ENCODE measurements at regions of chr12 and their contacts with region 1.

Region 1: DNA sequence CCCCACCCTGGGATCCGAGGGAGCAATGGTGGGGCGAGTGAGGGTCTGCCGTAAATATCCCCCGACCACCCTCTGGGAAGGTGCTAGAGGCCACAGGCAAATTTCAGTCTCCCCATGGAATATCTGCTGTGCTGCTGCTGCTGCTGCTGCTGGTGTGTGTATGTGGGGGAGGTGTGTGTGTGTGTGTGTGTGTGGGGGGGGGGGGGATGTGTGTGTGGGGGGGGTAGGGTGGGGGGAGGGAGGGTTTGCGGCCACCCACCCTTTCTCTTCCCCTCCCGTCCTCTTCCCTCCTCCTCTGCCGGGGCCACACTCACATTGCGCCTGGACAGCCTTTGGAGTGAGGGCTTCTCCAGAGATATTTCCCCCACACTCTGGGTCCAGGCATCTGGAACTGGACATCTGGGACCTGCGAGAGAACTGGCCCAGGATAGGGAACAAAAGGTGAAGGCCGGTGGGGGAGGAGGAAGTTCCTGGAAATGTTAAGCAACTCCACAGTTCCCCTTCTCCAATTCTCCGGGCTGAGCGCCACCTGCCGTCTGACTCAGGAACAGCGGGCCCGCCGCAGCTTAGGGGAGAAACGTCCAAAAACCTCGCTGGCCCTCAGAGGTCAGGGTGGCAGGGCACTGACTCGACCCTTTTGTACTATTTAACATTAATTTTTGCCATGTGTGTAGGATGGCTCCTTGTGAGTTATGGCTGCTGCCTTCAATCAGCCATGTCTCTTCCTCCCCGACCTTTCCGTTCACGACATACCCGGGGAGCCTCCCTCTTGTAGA is at the start of gene C1RL:
- DNase-seq: peak; percentile 85
- ATAC-seq: peak; percentile 27
- H3K4me3 Mint-ChIP-seq: peak within 1 kb of the TSS; percentile 95
- H3K27ac Mint-ChIP-seq: peak within 1 kb of the TSS; percentile 92
- H3K4me1 Mint-ChIP-seq: peaks cover 58% of the 10 kb centered on the region
- H3K27me3 Mint-ChIP-seq: no peaks in the 10 kb centered on the region
- total RNA-seq, gene C1RL: 21.5 to 23.3 TPM

Region 2: DNA sequence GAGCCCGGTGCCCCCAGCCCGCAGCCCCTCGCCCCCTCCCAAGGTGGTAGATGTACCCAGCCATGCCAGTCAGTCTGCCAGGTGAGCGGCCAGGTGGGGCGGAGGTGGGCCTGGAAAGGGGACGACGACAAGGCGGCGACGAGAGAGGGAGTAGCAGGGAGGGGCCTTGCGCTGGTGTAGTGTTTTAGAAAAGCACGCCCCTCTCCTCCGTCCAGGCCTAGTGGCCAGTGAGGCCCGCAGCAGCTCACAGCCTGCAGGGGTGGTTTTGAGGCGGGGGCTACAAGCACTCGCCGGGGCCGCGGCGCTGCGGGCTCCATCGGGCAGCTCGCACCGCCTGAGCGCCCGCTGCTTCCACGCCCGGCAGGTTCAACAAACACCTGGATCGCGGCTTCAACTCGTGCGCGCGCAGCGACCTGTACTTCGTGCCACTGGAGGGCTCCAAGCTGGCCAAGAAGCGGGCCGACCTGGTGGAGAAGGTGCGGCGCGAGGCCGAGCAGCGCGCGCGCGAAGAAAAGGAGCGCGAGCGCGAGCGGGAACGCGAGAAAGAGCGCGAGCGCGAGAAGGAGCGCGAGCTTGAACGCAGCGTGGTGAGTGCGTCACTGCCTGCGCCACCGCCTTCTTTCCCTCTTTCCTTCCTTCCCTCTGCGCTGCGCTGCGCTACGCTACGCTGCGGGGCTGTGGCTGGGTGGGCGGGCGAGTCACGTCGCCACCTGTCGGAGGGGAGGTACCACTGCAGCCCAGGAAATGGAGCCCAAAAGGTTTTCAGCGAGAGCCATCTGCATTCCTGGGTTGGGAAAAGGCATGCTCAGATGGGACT is 171.3 kb before region 1 on chr12:
- CTCF ChIA-PET with region 1: interaction called, 107 read pairs
- POLR2A ChIA-PET with region 1: interaction called, 6 read pairs
- DNase-seq: peak; percentile 96
- ATAC-seq: peak; percentile 93
- H3K4me3 Mint-ChIP-seq: peak overlapping the region; percentile 82
- H3K27ac Mint-ChIP-seq: peak overlapping the region; percentile 97
- H3K4me1 Mint-ChIP-seq: peaks cover 62% of the 10 kb centered on the region
- H3K27me3 Mint-ChIP-seq: no peaks in the 10 kb centered on the region

Region 3: DNA sequence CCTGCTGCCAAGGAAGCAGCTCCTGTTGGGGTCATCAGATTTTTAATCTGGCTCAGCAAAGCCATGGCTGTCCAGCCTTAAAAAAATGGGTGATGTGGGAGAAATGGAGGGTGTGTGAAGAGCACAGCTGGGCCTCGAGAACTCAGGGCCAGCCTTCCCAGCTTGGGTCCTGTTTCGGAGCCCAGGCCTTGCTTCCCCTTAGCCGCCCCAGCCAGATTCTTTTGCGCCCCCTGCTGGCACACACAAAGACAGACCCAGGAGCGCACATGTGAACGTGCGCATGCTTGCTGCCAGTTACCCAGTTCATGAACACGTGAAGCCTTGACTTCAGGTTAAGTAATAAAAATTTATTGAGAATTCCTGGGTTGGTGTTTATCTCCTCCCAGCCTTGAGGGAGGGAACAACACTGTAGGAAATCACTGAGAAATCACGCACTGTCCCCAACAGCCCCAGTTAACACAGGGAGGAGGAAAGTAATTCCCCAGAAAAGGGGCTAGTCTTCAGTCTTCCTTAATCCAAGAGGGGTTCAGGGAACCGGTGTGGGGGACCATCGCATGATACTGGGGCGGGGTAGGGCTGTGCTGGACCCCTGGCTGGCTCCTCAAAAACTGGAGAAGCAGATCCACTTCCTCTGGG is 143.8 kb before region 1 on chr12:
- CTCF ChIA-PET with region 1: interaction called, 19 read pairs
- POLR2A ChIA-PET with region 1: interaction called, 12 read pairs
- DNase-seq: peak; percentile 93
- ATAC-seq: peak; percentile 65
- H3K4me3 Mint-ChIP-seq: peak overlapping the region; percentile 12
- H3K27ac Mint-ChIP-seq: peak overlapping the region; percentile 77
- H3K4me1 Mint-ChIP-seq: peaks cover 75% of the 10 kb centered on the region
- H3K27me3 Mint-ChIP-seq: no peaks in the 10 kb centered on the region

Region 4: DNA sequence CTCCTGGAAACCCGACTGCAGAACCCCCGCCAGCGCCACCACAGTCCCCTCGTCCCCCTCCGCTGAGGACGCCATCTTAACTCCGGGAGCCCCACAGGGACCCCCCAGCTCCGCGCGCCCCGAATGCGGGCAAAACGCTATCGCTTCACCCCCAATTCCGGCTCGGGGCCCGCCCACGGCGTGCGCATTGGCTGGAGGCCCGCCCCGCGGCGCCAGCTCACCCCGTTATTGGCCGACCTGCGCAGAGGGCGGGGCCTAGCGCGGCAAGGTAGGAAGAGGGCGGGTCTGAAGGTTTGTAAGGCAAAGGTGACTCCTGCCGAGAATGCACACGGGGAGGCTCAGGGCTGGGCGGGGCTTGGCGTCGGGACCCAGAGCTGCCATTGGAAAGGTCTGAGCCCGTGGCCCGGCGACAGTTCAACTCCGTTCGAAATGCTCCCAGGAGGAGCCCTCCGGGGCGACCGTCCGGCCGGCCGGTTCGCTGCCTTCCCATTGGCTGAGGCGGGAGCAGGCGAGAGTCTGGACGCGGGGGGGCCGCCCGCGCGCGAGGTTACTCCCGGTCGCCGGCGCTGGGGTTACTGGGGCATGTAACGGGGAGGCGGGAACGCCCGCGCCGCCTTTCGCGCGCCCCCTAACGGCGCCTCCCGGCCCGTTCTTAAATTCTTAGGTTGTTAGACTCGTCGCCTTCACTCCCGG is 90.5 kb before region 1 on chr12 and contains the start of gene LPCAT3:
- CTCF ChIA-PET with region 1: interaction called, 15 read pairs
- POLR2A ChIA-PET with region 1: interaction called, 10 read pairs
- DNase-seq: peak; percentile 98
- ATAC-seq: peak; percentile 97
- H3K4me3 Mint-ChIP-seq: peak within 1 kb of the TSS; percentile 95
- H3K27ac Mint-ChIP-seq: peak within 1 kb of the TSS; percentile 86
- H3K4me1 Mint-ChIP-seq: peaks cover 28% of the 10 kb centered on the region
- H3K27me3 Mint-ChIP-seq: no peaks in the 10 kb centered on the region
- total RNA-seq, gene LPCAT3: 37.3 to 40.3 TPM

Region 5: DNA sequence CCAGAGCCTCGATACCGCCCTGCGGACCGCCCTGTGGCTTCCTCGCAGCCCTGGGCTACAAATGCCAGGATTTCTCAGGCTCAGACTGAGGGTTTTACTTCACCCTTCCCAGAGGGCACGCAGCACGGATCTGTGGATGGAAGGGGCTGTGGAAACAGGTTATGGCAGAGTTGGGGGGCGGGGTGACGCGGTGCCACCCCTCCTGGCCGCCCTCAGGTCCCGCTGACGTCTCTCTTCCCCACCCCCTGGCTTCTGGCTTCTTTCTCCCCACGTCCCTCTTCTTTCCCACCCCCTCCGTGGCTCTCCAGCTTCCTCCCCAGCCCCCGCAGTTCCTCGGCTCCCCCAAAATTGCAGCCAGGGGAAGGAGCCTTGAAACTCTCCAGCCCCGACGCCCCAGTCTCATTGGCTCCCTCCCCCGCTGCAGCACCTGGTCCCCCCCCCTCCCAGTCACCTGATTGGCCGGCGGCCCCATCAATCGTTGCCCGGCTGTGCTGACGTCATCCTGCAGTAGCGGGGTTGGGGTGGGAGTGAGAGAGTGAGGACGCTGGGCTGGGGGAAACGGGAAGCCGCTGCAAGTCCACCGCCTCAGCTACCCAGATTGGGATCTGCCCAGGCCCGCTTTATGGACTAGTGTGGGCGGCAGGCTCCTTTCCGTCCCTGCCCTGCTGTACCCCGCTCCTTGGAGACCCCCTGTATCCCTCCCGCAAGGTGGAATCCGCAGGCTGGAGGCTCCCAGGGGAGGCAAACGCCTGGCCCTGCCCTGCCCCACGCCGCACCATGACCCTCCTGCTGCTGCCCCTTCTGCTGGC is 21.1 kb after region 1 on chr12 and contains the start of gene CLSTN3:
- CTCF ChIA-PET with region 1: interaction called, 15 read pairs
- POLR2A ChIA-PET with region 1: interaction called, 3 read pairs
- DNase-seq: peak; percentile 90
- ATAC-seq: peak; percentile 86
- H3K4me3 Mint-ChIP-seq: peak within 1 kb of the TSS; percentile 92
- H3K27ac Mint-ChIP-seq: peak within 1 kb of the TSS; percentile 87
- H3K4me1 Mint-ChIP-seq: peaks cover 34% of the 10 kb centered on the region
- H3K27me3 Mint-ChIP-seq: no peaks in the 10 kb centered on the region
- total RNA-seq, gene CLSTN3: 76.8 to 83.9 TPM